Activated T-helper 2 cell treated with anti-CD3 and anti-CD28 coated beads, Interferon-gamma antibody, Interleukin-2, Interleukin-4, amounts not matched to agents 10 μg/mL and 5 μg/mL and 100 μg/mL, durations not matched to agents 14 hours and 24 hours and 36 hours (primary cell): ENCODE measurements at regions of chr14 and their contacts with region 1.

Region 1: DNA sequence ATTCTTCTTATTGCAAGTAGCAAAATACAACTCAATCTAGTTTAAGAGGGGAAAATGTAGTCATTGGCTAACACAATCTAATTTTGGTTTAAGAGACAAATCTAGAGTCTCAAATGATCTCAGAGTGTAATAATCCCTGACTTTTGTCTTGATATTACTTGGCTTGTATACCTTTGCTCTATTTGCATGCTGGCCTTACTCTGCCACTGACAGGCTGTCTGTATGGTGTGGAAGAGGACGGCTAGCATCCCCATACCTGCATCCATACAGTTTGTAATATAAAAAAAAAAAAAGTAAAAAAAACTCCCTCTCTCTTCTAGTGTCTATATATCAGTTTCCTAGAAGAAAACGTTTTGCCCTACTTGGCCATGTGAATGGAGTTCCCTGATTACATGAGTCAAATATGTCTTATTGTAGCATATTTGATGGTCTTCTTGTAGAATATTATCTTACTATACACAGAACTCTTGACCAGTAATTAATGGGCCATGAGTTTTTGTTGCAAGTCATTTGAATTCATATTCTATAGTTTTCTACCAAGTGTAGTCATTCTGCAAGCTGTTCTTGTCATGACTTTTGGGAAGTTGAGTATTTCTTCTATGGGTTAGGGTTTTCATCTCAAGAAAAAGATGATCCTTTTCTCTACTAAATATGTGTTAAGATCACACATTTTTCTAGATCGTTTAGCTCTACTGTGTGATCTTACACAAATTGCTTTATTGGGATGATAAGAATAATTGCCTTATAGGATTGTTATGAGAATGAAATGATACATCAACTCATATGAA is 8.2 kb downstream of the HIF1A start:
- DNase-seq: no peak
- H3K4me3 Mint-ChIP-seq: no peak overlapping the region
- H3K27ac Mint-ChIP-seq: peak overlapping the region; percentile 36
- H3K4me1 Mint-ChIP-seq: peaks cover 67% of the 10 kb centered on the region
- H3K27me3 Mint-ChIP-seq: no peaks in the 10 kb centered on the region

Region 2: GRCh38 chr14:61547186-61548086 is 156.1 kb before region 1 on chr14:
- intact Hi-C with region 1: no loop called
- DNase-seq: no peak
- H3K4me3 Mint-ChIP-seq: no peak overlapping the region
- H3K27ac Mint-ChIP-seq: no peak overlapping the region
- H3K4me1 Mint-ChIP-seq: peaks cover 19% of the 10 kb centered on the region
- H3K27me3 Mint-ChIP-seq: no peaks in the 10 kb centered on the region

Region 3: DNA sequence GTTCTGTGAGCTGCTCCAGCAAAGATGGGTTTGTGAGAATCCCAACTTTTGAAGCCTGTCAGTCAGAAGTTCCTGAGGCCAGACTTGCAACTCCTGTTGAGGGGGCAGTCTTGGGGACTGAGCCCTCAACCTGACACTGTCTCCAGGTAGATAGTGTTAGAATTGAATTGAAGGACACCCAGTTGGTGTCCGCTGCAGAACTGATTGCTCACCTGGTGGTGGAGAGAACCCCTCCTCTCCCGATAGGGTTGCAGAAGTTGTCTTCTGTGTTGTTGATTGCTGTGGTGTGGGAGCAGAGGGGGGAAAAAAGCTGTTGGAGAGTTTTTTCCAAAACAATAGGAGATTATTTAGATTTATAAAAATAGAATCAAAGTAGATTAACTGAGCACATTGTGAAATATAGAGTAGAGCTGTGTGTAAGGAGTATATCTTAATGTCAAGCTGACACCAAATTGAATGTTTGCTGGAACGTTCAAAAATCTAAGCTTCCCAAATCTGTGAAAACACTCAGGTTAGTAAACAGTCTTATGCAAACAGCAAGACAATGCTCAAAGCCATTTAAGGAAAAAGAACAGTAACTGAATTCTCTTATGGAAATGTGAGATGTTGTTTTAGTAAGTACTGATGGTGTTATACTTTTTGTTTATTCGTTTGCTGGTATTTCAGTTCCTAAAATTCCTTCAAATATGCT is 10.3 kb after region 1 on chr14:
- intact Hi-C with region 1: loop called (anchors 1 kb)
- DNase-seq: no peak
- H3K4me3 Mint-ChIP-seq: no peak overlapping the region
- H3K27ac Mint-ChIP-seq: peak overlapping the region; percentile 43
- H3K4me1 Mint-ChIP-seq: peaks cover 61% of the 10 kb centered on the region
- H3K27me3 Mint-ChIP-seq: no peaks in the 10 kb centered on the region

Region 4: GRCh38 chr14:61719344-61720293 is 16.1 kb after region 1 on chr14:
- intact Hi-C with region 1: loop called (anchors 2 kb)
- DNase-seq: no peak
- H3K4me3 Mint-ChIP-seq: peak overlapping the region; percentile 52
- H3K27ac Mint-ChIP-seq: peak overlapping the region; percentile 81
- H3K4me1 Mint-ChIP-seq: peaks cover 57% of the 10 kb centered on the region
- H3K27me3 Mint-ChIP-seq: no peaks in the 10 kb centered on the region

Region 5: DNA sequence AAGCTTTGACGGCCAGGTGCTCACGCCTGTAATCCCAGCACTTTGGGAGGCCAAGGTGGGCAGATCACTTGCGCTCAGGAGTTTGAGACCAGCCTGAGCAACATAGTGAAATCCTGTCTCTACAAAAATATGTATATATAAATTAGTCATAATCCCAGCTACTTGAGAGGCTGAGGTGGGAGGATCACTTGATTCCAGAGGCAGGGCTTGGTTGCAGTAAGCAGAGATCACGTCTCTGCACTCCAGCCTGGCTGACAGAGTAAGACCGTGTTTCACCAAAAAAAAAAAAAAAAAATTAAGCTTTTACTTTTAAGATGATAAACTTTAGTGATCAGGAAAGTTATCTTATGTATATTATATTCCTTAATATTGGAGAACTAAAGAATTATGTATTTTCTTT is 40.7 kb after region 1 on chr14:
- intact Hi-C with region 1: loop called (anchors 2 kb)
- DNase-seq: no peak
- H3K4me3 Mint-ChIP-seq: no peak overlapping the region
- H3K27ac Mint-ChIP-seq: no peak overlapping the region
- H3K4me1 Mint-ChIP-seq: peaks cover 28% of the 10 kb centered on the region
- H3K27me3 Mint-ChIP-seq: no peaks in the 10 kb centered on the region